CD8-positive, alpha-beta memory T cell (primary cell): ENCODE measurements at regions of chr7 and their contacts with region 1.

Region 1: DNA sequence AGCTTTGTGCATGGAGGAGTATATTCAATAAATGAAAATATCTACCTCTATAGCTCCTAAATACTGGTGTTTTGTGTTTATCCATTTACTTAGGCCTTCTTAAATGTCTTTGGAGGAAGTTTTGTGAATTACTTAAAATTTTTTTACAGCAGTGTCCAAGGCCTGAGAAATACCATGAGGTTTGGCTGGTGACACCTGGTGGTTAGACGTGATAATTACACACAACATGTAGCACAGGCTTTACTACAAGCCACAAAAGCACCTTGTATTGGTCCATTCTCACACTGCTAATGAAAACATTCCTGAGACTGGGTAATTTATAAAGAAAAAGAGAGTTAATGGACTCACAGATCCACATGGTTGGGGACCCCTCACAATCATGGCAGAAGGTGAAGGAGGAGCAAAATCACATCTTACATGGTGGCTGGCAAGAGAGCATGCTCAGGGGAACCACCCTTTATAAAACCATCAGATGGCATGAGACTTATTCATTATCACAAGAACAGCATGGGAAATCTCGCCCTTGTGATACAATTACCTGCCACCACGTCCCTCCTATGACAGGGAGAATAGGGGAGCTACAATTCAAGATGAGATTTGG is 20.6 kb downstream of the HYAL4 start:
- DNase-seq: peak in 4 of 5 donors; percentile 4 to 35 (median 18)
- H3K4me3 ChIP-seq: no peak overlapping the region
- H3K4me3 Mint-ChIP-seq: no peak overlapping the region
- H3K27ac ChIP-seq: no peak overlapping the region
- H3K27ac Mint-ChIP-seq: no peak overlapping the region
- H3K4me1 ChIP-seq: no peaks in the 10 kb centered on the region
- H3K4me1 Mint-ChIP-seq: no peaks in the 10 kb centered on the region
- H3K27me3 ChIP-seq: no peaks in the 10 kb centered on the region
- H3K27me3 Mint-ChIP-seq: peaks cover 5 to 8% of the 10 kb centered on the region in 2 donors

Region 2: GRCh38 chr7:123494193-123494796 is 371.3 kb before region 1 on chr7:
- CTCF ChIA-PET with region 1: interaction called, 10 read pairs
- POLR2A ChIA-PET with region 1: no interaction called
- DNase-seq: peak in 2 of 5 donors; percentile 9 to 27
- H3K4me3 ChIP-seq: no peak overlapping the region
- H3K4me3 Mint-ChIP-seq: no peak overlapping the region
- H3K27ac ChIP-seq: no peak overlapping the region
- H3K27ac Mint-ChIP-seq: no peak overlapping the region
- H3K4me1 ChIP-seq: no peaks in the 10 kb centered on the region
- H3K4me1 Mint-ChIP-seq: peaks cover 0 to 4% (median 2%) of the 10 kb centered on the region in 3 donors
- H3K27me3 ChIP-seq: peaks cover 6% of the 10 kb centered on the region
- H3K27me3 Mint-ChIP-seq: peaks cover 3 to 38% of the 10 kb centered on the region in 2 donors

Region 3: DNA sequence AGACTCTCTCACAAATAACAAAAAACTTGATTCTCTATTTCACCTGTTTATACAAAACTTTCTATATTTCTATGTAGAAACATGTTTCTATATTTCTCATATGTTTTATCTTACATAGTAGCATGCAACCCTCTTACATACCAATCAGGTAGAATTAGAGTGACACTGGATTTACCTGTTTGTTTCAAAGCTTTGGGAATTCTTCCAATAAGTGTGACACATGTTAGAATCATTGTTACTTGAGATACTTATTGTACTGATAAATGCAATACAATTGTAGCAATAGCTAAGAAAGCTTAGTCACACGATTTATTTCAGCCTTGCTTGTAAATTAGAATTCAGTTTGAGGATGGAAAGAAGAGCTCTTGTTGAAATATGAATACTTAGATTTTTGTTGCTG is 15.8 kb before region 1 on chr7:
- CTCF ChIA-PET with region 1: interaction called, 11 read pairs
- POLR2A ChIA-PET with region 1: no interaction called
- DNase-seq: no peak
- H3K4me3 ChIP-seq: no peak overlapping the region
- H3K4me3 Mint-ChIP-seq: no peak overlapping the region
- H3K27ac ChIP-seq: no peak overlapping the region
- H3K27ac Mint-ChIP-seq: no peak overlapping the region
- H3K4me1 ChIP-seq: no peaks in the 10 kb centered on the region
- H3K4me1 Mint-ChIP-seq: no peaks in the 10 kb centered on the region
- H3K27me3 ChIP-seq: no peaks in the 10 kb centered on the region
- H3K27me3 Mint-ChIP-seq: peaks cover 15 to 17% of the 10 kb centered on the region in 2 donors

Region 4: GRCh38 chr7:123916240-123916724 is 50.7 kb after region 1 on chr7:
- CTCF ChIA-PET with region 1: no interaction called
- POLR2A ChIA-PET with region 1: no interaction called
- DNase-seq: no peak
- H3K4me3 ChIP-seq: no peak overlapping the region
- H3K4me3 Mint-ChIP-seq: no peak overlapping the region
- H3K27ac ChIP-seq: no peak overlapping the region
- H3K27ac Mint-ChIP-seq: no peak overlapping the region
- H3K4me1 ChIP-seq: no peaks in the 10 kb centered on the region
- H3K4me1 Mint-ChIP-seq: no peaks in the 10 kb centered on the region
- H3K27me3 ChIP-seq: no peaks in the 10 kb centered on the region
- H3K27me3 Mint-ChIP-seq: peaks cover 0 to 2% of the 10 kb centered on the region in 2 donors